B cell (primary cell): ENCODE measurements at regions of chr22 and their contacts with region 1.

Region 1: DNA sequence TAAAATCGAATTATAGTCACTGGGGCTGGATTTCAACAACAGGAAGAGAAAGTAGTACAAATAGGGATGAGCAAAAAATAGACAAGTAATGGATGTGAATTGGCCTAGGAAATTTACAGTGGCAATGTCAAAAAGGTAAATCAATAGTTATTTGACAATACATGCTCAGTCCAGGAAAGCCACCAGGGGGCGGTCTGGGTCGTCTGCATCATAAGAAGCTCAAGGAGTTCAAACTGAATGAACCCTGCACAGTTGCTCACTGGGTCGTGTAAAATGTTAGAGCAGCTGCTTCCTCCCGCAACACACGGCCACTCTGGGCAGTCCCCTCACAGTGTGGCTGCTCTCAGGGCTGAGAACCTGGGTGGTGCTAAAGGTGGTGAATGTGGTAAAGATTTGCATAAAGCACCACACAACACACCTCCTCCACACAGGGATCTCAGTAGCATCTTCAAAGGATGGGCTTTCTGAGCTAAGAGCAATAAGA is 85.9 kb downstream of the ZNF280B start:
- DNase-seq: peak; percentile 96
- ATAC-seq: peak; percentile 99
- H3K4me3 ChIP-seq: no peak overlapping the region
- H3K4me3 Mint-ChIP-seq: peak overlapping the region; percentile 33
- H3K27ac ChIP-seq: peak overlapping the region in 1 of 2 donors; percentile 42
- H3K27ac Mint-ChIP-seq: peak overlapping the region; percentile 72
- H3K4me1 ChIP-seq: peaks cover 61 to 63% of the 10 kb centered on the region in 2 donors
- H3K4me1 Mint-ChIP-seq: peaks cover 65% of the 10 kb centered on the region
- H3K27me3 ChIP-seq: no peaks in the 10 kb centered on the region
- H3K27me3 Mint-ChIP-seq: no peaks in the 10 kb centered on the region
- CTCF ChIP-seq: peak; percentile 92

Region 2: GRCh38 chr22:22371031-22371541 is 51.6 kb before region 1 on chr22:
- CTCF ChIA-PET with region 1: interaction called, 9 read pairs
- POLR2A ChIA-PET with region 1: interaction called, 3 read pairs
- intact Hi-C with region 1: loop called (anchors 1 kb)
- DNase-seq: no peak
- ATAC-seq: no peak
- H3K4me3 ChIP-seq: no peak overlapping the region
- H3K4me3 Mint-ChIP-seq: peak overlapping the region; percentile 29
- H3K27ac ChIP-seq: no peak overlapping the region
- H3K27ac Mint-ChIP-seq: peak overlapping the region; percentile 64
- H3K4me1 ChIP-seq: peaks cover 73 to 76% of the 10 kb centered on the region in 2 donors
- H3K4me1 Mint-ChIP-seq: peaks cover 87% of the 10 kb centered on the region
- H3K27me3 ChIP-seq: no peaks in the 10 kb centered on the region
- H3K27me3 Mint-ChIP-seq: no peaks in the 10 kb centered on the region
- CTCF ChIP-seq: no peak

Region 3: GRCh38 chr22:22397277-22397870 is 25.3 kb before region 1 on chr22:
- CTCF ChIA-PET with region 1: interaction called, 33 read pairs
- POLR2A ChIA-PET with region 1: interaction called, 8 read pairs
- intact Hi-C with region 1: no loop called
- DNase-seq: no peak
- ATAC-seq: no peak
- H3K4me3 ChIP-seq: no peak overlapping the region
- H3K4me3 Mint-ChIP-seq: no peak overlapping the region
- H3K27ac ChIP-seq: peak overlapping the region in 1 of 2 donors; percentile 48
- H3K27ac Mint-ChIP-seq: peak overlapping the region; percentile 78
- H3K4me1 ChIP-seq: peaks cover 42 to 69% of the 10 kb centered on the region in 2 donors
- H3K4me1 Mint-ChIP-seq: peaks cover 57% of the 10 kb centered on the region
- H3K27me3 ChIP-seq: peaks cover 0 to 3% (median 0%) of the 10 kb centered on the region in 4 experiments
- H3K27me3 Mint-ChIP-seq: no peaks in the 10 kb centered on the region
- CTCF ChIP-seq: no peak

Region 4: DNA sequence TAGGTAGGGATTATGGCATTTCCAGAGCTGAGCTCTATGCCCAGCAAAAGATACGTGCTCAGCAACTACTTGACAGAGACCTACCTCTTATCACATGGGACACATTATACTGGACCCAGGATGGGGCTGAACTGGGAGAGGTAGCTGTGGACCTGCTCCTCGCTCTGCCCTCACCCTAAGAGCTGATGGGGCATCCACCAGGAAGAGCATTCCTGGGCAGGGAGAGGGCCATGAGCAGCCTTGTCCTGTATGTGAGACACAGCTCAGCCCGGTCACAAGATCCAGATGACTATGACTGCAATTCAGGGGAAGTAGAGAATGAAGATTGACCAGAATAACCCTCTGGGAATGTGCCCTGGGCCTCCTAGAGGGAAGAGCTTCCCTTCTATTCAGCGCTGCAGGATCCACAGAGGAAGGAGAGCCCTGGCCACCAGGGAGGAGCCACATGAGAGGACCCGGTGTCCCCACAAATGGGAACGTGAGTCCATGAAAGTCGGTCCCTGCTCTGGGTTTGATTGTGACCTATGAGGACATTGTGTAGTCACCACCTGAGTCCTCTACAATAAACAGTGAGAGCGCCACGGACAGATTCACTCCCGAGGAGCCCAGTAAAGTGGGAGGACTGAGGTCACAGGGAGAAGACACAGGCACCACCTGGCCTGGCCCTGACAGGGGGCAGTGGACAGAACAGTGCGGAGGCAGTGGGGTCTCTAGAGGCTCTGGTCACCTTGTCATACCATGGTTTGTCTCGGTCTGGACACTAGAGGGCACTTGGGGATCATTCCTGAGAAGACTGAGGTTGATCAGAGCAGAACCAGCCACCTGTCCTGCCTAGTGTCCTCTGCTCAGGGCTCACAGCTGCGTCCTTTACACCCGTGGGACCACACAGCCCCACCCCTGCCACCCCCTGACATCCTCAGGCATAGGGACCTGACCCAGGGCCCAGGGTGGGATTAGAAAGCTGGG is 13.7 kb before region 1 on chr22:
- CTCF ChIA-PET with region 1: interaction called, 50 read pairs
- POLR2A ChIA-PET with region 1: interaction called, 3 read pairs
- intact Hi-C with region 1: loop called (anchors 1 kb)
- DNase-seq: peak; percentile 69
- ATAC-seq: peak; percentile 43
- H3K4me3 ChIP-seq: peak overlapping the region in 1 of 5 experiments; percentile 21
- H3K4me3 Mint-ChIP-seq: peak overlapping the region; percentile 74
- H3K27ac ChIP-seq: peak overlapping the region in 1 of 2 donors; percentile 60
- H3K27ac Mint-ChIP-seq: peak overlapping the region; percentile 53
- H3K4me1 ChIP-seq: peaks cover 39 to 61% of the 10 kb centered on the region in 2 donors
- H3K4me1 Mint-ChIP-seq: peaks cover 61% of the 10 kb centered on the region
- H3K27me3 ChIP-seq: no peaks in the 10 kb centered on the region
- H3K27me3 Mint-ChIP-seq: no peaks in the 10 kb centered on the region
- CTCF ChIP-seq: no peak

Region 5: GRCh38 chr22:22463855-22464540 is 41.3 kb after region 1 on chr22:
- CTCF ChIA-PET with region 1: interaction called, 26 read pairs
- POLR2A ChIA-PET with region 1: no interaction called
- intact Hi-C with region 1: loop called (anchors 2 kb)
- DNase-seq: peak; percentile 84
- ATAC-seq: peak; percentile 47
- H3K4me3 ChIP-seq: peak overlapping the region in 1 of 5 experiments; percentile 46
- H3K4me3 Mint-ChIP-seq: no peak overlapping the region
- H3K27ac ChIP-seq: no peak overlapping the region
- H3K27ac Mint-ChIP-seq: peak overlapping the region; percentile 16
- H3K4me1 ChIP-seq: peaks cover 13 to 15% of the 10 kb centered on the region in 2 donors
- H3K4me1 Mint-ChIP-seq: peaks cover 19% of the 10 kb centered on the region
- H3K27me3 ChIP-seq: no peaks in the 10 kb centered on the region
- H3K27me3 Mint-ChIP-seq: peaks cover 3% of the 10 kb centered on the region
- CTCF ChIP-seq: peak; percentile 88

Region 6: DNA sequence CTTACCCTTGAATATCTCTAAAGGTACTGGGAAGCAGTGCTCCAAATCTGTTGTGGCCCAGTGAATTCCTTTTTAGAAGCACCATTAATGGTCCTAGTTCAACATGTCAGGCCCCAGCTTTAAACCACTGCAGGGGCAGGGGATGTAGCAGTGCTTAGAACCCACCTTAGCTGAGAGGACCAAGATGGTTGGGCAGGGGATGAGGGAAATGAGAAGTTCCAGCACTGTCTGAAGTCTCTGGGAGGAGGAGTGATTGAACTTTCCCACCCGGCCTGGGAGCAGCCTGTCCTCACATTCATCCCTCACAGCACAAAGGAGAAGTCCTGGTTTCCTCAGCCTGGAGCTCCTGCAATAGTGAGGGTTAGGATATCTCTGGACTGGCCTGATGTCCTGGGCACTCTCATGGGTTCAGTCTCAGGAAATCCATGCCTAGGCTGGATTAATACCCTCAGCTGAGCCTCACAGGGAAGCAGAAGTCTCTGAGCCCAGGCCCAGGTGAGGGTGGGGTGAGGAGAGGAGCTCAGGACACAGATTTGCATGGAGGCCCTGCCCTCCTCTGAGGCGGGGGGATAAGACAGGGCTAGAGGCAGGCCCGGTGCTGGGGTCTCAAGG is 165.0 kb after region 1 on chr22:
- CTCF ChIA-PET with region 1: interaction called, 66 read pairs
- POLR2A ChIA-PET with region 1: no interaction called
- intact Hi-C with region 1: no loop called
- DNase-seq: no peak
- ATAC-seq: no peak
- H3K4me3 ChIP-seq: no peak overlapping the region
- H3K4me3 Mint-ChIP-seq: no peak overlapping the region
- H3K27ac ChIP-seq: peak overlapping the region in 1 of 2 donors; percentile 23
- H3K27ac Mint-ChIP-seq: no peak overlapping the region
- H3K4me1 ChIP-seq: peaks cover 36 to 38% of the 10 kb centered on the region in 2 donors
- H3K4me1 Mint-ChIP-seq: peaks cover 33% of the 10 kb centered on the region
- H3K27me3 ChIP-seq: no peaks in the 10 kb centered on the region
- H3K27me3 Mint-ChIP-seq: no peaks in the 10 kb centered on the region
- CTCF ChIP-seq: no peak